ENCODE measurements at regions of chr16 and their contacts with region 1.

Region 1: GRCh38 chr16:68328151-68328859 is 17.5 kb downstream of the PRMT7 start:
- DNase-seq: peak; percentile 86 to 94
- H3K4me3 ChIP-seq: no peak overlapping the region
- H3K27ac ChIP-seq: peak overlapping the region in 2 of 5 donors; percentile 22 to 71
- H3K4me1 ChIP-seq: peaks cover 4 to 46% (median 20%) of the 10 kb centered on the region in 4 donors
- H3K27me3 ChIP-seq: no peaks in the 10 kb centered on the region
- CTCF ChIP-seq: peak in 5 of 7 experiments; percentile 88 to 97 (median 95)
- EP300 ChIP-seq: no peak
- POLR2A ChIP-seq: no peak

Region 2: DNA sequence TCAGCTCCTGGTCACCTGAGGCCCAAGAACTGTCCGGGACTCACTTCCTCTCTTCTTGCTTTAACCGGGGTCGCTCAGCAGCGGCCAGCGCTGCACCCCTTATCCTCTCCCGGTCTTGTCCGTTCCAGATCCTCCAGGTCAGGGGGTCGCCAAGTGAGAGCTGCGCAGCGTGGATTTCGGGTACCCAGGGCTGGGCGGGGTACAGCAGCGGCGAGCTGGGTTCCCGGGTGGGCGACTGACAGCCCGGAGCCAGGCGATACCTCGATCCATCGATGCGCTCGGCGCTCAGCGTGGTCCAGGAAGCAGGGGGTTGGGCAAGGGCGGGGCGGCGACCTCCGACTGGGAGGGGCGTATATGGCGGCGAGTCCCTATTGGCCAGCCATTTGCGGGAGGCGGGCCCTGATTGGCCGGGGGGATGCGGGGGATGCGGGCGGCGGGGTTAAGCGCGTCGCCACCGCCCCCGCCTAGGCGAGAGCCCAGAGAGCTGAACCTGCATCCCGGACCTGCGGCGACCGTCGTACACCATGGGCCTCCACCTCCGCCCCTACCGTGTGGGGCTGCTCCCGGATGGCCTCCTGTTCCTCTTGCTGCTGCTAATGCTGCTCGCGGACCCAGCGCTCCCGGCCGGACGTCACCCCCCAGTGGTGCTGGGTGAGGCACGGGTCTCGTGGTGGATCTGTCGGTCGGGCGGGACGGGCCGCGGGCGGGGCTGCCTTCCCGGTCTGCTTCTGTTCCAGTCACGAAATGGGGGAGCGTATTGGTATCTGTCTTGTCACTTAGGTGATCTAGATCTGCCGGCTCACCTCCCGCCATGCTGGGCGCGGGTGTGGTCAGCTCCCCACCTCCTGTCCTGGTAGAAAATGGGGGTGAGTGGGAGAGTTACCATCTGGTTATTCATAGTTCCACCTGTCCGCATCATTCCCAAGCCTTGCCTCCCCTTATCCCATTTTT is 83.1 kb before region 1 on chr16 and contains the start of gene PLA2G15:
- intact Hi-C with region 1: loop called (anchors 5 kb)
- DNase-seq: peak; percentile 96 to 98
- H3K4me3 ChIP-seq: peak within 1 kb of the TSS; percentile 63 to 86 (median 76)
- H3K27ac ChIP-seq: peak within 1 kb of the TSS; percentile 28 to 78 (median 75)
- H3K4me1 ChIP-seq: peaks cover 21 to 41% (median 33%) of the 10 kb centered on the region in 4 donors
- H3K27me3 ChIP-seq: no peaks in the 10 kb centered on the region
- CTCF ChIP-seq: no peak
- EP300 ChIP-seq: no peak
- POLR2A ChIP-seq: peak in 1 of 4 donors; percentile 27
- total RNA-seq, gene PLA2G15: 3.5 to 16.5 (median 9.8) TPM

Region 3: DNA sequence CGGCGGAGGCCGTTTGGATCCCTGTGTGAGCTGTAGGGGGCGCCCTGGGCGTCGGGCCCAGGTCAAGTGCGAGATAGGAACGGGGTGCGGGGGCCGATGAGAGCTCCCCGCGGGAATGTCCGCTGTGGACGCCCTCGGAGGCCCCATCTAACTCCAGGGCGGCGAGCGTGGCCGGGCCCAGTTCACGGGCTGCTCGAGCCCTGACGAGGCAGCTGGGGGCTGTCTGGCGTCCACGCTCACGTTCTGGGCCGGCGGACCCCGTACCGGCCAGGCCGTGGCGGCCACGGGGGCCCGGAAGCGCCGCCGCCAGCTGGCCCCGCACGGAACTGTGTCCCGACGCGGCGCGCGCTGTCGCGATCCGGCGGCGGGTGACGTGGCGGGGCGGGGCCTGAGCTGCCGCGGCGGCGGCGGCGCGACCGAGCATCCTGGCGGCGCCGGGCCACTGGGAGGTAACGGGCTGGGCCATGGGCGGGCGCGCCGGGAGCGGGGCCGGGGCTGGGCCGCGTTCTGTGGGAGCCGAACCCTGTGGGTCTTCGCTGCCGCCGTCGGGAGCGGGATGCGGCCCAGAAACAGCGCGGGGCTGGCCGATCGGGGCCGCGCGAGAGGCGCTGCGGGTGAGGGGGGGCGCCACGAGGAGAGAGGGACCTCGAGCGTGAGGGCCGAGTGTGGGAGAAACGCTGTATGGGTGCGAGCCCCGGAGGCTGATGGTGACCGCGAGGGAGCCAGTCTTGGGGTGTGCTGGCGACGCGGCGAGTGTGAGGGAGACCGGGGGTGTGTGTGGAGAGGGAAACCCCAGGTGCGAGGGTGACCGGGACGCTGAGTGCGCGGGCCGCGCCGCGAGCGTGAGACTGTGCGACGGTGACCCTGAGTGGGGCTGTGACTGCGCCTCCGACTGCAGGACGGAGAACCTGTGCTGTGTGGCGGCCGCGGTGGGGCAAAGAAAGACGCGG is 63.9 kb before region 1 on chr16 and contains the start of gene SLC7A6:
- intact Hi-C with region 1: loop called (anchors 5 kb)
- DNase-seq: peak; percentile 79 to 87
- H3K4me3 ChIP-seq: peak within 1 kb of the TSS; percentile 65 to 91 (median 75)
- H3K27ac ChIP-seq: peak within 1 kb of the TSS; percentile 91 to 97 (median 94)
- H3K4me1 ChIP-seq: peaks cover 20 to 63% (median 35%) of the 10 kb centered on the region in 4 donors
- H3K27me3 ChIP-seq: no peaks in the 10 kb centered on the region
- CTCF ChIP-seq: peak in 4 of 7 experiments; percentile 39 to 66 (median 51)
- EP300 ChIP-seq: no peak
- POLR2A ChIP-seq: no peak
- total RNA-seq, gene SLC7A6: 11.9 to 66.1 (median 17.2) TPM

Region 4: GRCh38 chr16:68384288-68385161 is 56.2 kb after region 1 on chr16:
- intact Hi-C with region 1: no loop called
- DNase-seq: no peak
- H3K4me3 ChIP-seq: peak overlapping the region in 1 of 4 donors; percentile 11
- H3K27ac ChIP-seq: peak overlapping the region in 1 of 5 donors; percentile 15
- H3K4me1 ChIP-seq: peaks cover 0 to 46% (median 28%) of the 10 kb centered on the region in 4 donors
- H3K27me3 ChIP-seq: no peaks in the 10 kb centered on the region
- CTCF ChIP-seq: no peak
- EP300 ChIP-seq: no peak
- POLR2A ChIP-seq: no peak

Region 5: DNA sequence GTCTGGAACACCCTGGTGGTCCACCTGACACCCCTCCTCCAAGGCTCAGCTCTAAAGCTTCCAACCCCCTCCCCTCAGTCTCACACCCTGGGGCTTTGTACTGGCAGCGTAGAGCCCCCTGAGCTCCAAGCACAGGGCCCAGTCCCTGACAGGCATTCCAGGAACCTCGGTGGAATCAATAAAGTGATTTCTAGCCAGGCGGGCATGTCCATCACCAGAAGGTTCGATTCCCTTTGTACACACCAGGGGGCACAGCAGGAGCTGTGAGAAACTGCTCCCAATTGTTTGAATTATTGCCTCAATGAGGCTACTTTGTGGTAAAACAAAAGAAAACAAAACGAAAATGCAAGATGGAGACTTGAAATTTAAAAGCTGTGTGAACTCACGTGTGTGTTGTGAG is 68.2 kb after region 1 on chr16:
- intact Hi-C with region 1: no loop called
- DNase-seq: peak; percentile 64 to 74
- H3K4me3 ChIP-seq: no peak overlapping the region
- H3K27ac ChIP-seq: no peak overlapping the region
- H3K4me1 ChIP-seq: peaks cover 0 to 5% (median 0%) of the 10 kb centered on the region in 4 donors
- H3K27me3 ChIP-seq: peaks cover 0 to 3% (median 0%) of the 10 kb centered on the region in 3 donors
- CTCF ChIP-seq: peak in 5 of 7 experiments; percentile 36 to 79 (median 59)
- EP300 ChIP-seq: no peak
- POLR2A ChIP-seq: no peak

Region 6: DNA sequence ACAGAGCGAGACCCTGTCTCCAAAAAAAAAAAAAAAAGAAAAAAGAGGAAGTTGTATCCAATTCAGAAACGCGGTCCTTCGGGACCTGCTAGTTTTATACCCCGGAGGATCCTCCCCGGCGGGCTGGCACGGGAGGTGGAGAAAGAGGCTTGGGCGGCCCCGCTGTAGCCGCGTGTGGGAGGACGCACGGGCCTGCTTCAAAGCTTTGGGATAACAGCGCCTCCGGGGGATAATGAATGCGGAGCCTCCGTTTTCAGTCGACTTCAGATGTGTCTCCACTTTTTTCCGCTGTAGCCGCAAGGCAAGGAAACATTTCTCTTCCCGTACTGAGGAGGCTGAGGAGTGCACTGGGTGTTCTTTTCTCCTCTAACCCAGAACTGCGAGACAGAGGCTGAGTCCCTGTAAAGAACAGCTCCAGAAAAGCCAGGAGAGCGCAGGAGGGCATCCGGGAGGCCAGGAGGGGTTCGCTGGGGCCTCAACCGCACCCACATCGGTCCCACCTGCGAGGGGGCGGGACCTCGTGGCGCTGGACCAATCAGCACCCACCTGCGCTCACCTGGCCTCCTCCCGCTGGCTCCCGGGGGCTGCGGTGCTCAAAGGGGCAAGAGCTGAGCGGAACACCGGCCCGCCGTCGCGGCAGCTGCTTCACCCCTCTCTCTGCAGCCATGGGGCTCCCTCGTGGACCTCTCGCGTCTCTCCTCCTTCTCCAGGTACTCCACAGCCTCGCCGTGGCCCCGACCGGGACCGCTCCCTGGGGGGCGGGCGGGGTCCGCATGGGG is 316.6 kb after region 1 on chr16 and contains the start of gene CDH3:
- intact Hi-C with region 1: no loop called
- DNase-seq: peak; percentile 63 to 88
- H3K4me3 ChIP-seq: peak within 1 kb of the TSS; percentile 35 to 61 (median 50)
- H3K27ac ChIP-seq: peak within 1 kb of the TSS in 3 of 5 donors; percentile 7 to 42 (median 30)
- H3K4me1 ChIP-seq: peaks cover 27 to 38% (median 32%) of the 10 kb centered on the region in 4 donors
- H3K27me3 ChIP-seq: peaks cover 22 to 83% (median 49%) of the 10 kb centered on the region in 3 donors
- CTCF ChIP-seq: no peak
- EP300 ChIP-seq: no peak
- POLR2A ChIP-seq: no peak
- total RNA-seq, gene CDH3: 1.6 to 28.6 (median 4.0) TPM in 3 of 5 donors, not detected in the others